IMR-90 (cell line): ENCODE measurements at regions of chr3 and their contacts with region 1.

Region 1: GRCh38 chr3:136149667-136150066 is 46.5 kb downstream of the MSL2 start:
- DNase-seq: peak; percentile 61
- ATAC-seq: peak; percentile 35; the same call in 1 of the 2 replicates
- H3K4me3 ChIP-seq: no peak overlapping the region
- H3K27ac ChIP-seq: no peak overlapping the region
- H3K4me1 ChIP-seq: peaks cover 5% of the 10 kb centered on the region; the same call in 1 of the 2 replicates
- H3K27me3 ChIP-seq: no peaks in the 10 kb centered on the region
- CTCF ChIP-seq: no peak
- POLR2A ChIP-seq: no peak
- RAD21 ChIP-seq: no peak

Region 2: GRCh38 chr3:135973841-135974240 is 175.8 kb before region 1 on chr3:
- CTCF ChIA-PET with region 1: no interaction called
- POLR2A ChIA-PET with region 1: no interaction called
- dilution Hi-C with region 1: no loop called
- in situ Hi-C with region 1: no loop called
- intact Hi-C with region 1: no loop called
- DNase-seq: no peak
- ATAC-seq: no peak
- H3K4me3 ChIP-seq: no peak overlapping the region
- H3K27ac ChIP-seq: no peak overlapping the region
- H3K4me1 ChIP-seq: peaks cover 14% of the 10 kb centered on the region
- H3K27me3 ChIP-seq: no peaks in the 10 kb centered on the region
- CTCF ChIP-seq: no peak
- POLR2A ChIP-seq: no peak
- RAD21 ChIP-seq: no peak

Region 3: GRCh38 chr3:136186344-136186743 is 36.7 kb after region 1 on chr3:
- CTCF ChIA-PET with region 1: no interaction called
- POLR2A ChIA-PET with region 1: no interaction called
- dilution Hi-C with region 1: no loop called
- in situ Hi-C with region 1: no loop called
- intact Hi-C with region 1: loop called (anchors 2 kb)
- DNase-seq: no peak
- ATAC-seq: peak; percentile 30
- H3K4me3 ChIP-seq: no peak overlapping the region
- H3K27ac ChIP-seq: no peak overlapping the region
- H3K4me1 ChIP-seq: peaks cover 13% of the 10 kb centered on the region
- H3K27me3 ChIP-seq: no peaks in the 10 kb centered on the region
- CTCF ChIP-seq: no peak
- POLR2A ChIP-seq: no peak
- RAD21 ChIP-seq: no peak